ENCODE measurements at regions of chr9 and their contacts with region 1.

Region 1: GRCh38 chr9:22238809-22239684 is 207.6 kb upstream of the DMRTA1 start:
- DNase-seq: no peak
- H3K4me3 Mint-ChIP-seq: no peak overlapping the region
- H3K27ac Mint-ChIP-seq: no peak overlapping the region
- H3K4me1 Mint-ChIP-seq: peaks cover 36% of the 10 kb centered on the region
- H3K27me3 Mint-ChIP-seq: peaks cover 57% of the 10 kb centered on the region

Region 2: GRCh38 chr9:22208846-22209585 is 30.0 kb before region 1 on chr9:
- intact Hi-C with region 1: loop called (anchors 1 kb)
- DNase-seq: no peak
- H3K4me3 Mint-ChIP-seq: peak overlapping the region; percentile 40
- H3K27ac Mint-ChIP-seq: no peak overlapping the region
- H3K4me1 Mint-ChIP-seq: peaks cover 19% of the 10 kb centered on the region
- H3K27me3 Mint-ChIP-seq: peaks cover 21% of the 10 kb centered on the region

Region 3: GRCh38 chr9:22228542-22228941 is 10.5 kb before region 1 on chr9:
- intact Hi-C with region 1: no loop called
- DNase-seq: no peak
- H3K4me3 Mint-ChIP-seq: no peak overlapping the region
- H3K27ac Mint-ChIP-seq: no peak overlapping the region
- H3K4me1 Mint-ChIP-seq: no peaks in the 10 kb centered on the region
- H3K27me3 Mint-ChIP-seq: peaks cover 27% of the 10 kb centered on the region

Region 4: GRCh38 chr9:22265038-22265437 is 26.0 kb after region 1 on chr9:
- intact Hi-C with region 1: no loop called
- DNase-seq: no peak
- H3K4me3 Mint-ChIP-seq: no peak overlapping the region
- H3K27ac Mint-ChIP-seq: no peak overlapping the region
- H3K4me1 Mint-ChIP-seq: no peaks in the 10 kb centered on the region
- H3K27me3 Mint-ChIP-seq: no peaks in the 10 kb centered on the region

Region 5: DNA sequence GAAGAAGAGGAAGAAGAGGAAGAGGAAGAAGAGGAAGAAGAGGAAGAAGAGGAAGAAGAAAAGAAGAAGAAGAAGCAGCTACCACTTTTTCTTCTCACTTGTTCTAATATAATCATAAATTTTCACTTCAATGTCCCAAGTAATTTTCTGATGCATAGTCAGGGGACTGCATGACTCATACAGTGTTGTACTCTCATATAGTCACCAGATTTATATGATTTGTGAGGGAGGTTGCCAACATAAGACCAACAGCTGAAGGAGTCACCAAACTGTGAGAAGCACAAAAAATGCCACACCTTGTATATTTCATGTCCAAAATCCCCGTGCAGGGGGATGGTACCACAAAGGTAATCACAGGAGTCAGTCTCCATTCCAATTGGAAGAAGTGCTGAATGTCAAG is 174.8 kb after region 1 on chr9:
- intact Hi-C with region 1: no loop called
- DNase-seq: no peak
- H3K4me3 Mint-ChIP-seq: no peak overlapping the region
- H3K27ac Mint-ChIP-seq: no peak overlapping the region
- H3K4me1 Mint-ChIP-seq: no peaks in the 10 kb centered on the region
- H3K27me3 Mint-ChIP-seq: no peaks in the 10 kb centered on the region

Region 6: DNA sequence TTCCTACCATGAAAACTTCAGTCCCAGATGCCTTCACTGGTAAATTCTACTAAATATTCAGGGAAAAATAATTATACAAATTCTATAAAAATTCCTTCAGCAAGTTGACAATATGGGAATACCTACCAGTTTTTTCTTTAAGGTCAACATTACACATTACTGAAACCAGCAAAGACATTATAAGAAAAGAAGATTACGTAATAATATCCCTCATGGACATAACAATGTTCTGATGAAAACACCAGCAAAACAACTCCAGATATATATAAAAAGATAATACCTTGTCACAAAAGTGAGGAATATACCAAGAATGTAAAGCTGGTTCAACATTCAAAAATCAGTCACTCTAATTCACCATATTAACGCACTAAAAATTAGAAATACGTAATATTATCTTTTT is 715.5 kb after region 1 on chr9:
- intact Hi-C with region 1: no loop called
- DNase-seq: no peak
- H3K4me3 Mint-ChIP-seq: no peak overlapping the region
- H3K27ac Mint-ChIP-seq: no peak overlapping the region
- H3K4me1 Mint-ChIP-seq: no peaks in the 10 kb centered on the region
- H3K27me3 Mint-ChIP-seq: no peaks in the 10 kb centered on the region

Measured in activated CD4-positive, alpha-beta T cell treated with anti-CD3 and anti-CD28 coated beads, Interleukin-2, amount 10 ng/mL, durations not matched to agents 24 days and 14 days (primary cell).